B cell (primary cell): ENCODE measurements at regions of chr3 and their contacts with region 1.

Region 1: DNA sequence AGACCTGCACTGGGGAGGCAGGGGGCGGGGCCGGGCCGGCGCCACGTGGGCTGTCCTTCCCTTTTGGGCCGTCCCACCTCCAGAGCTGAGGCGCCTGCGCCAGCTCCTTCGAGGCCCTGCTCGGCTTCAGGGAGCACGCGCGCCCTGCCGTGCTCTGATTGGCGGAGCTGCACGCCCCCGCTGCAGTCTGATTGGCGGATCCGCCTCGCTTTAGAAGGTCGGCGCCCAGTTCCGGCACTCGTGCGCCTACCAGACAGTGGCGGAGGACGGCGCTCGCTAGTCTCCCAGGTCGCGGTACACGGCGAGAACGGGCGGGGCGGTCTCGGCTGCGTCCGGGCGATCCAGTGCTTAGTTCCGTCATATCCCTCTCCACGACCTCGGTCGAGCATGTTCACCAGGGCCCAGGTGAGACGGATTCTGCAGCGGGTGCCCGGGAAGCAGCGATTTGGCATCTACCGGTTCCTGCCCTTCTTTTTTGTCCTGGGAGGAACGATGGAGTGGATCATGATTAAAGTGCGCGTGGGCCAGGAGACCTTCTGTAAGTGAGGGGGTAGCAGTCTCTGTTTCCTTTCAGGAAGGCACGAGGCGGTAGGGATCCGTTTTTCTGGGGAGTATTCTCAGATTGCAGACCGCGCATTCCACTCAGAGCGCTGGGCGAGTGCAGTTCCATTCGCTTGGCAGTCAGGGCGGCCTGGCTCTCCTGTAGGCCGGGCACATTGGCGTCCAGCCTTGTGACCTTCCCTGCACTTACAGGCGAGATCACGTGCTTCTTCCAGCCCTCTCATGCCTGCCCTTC is at the start of gene UQCC5:
- DNase-seq: peak; percentile 99
- ATAC-seq: peak; percentile 84
- H3K4me3 ChIP-seq: peak within 1 kb of the TSS; percentile 90 to 99 (median 95)
- H3K4me3 Mint-ChIP-seq: peak within 1 kb of the TSS; percentile 99
- H3K27ac ChIP-seq: peak within 1 kb of the TSS; percentile 84 to 93
- H3K27ac Mint-ChIP-seq: peak within 1 kb of the TSS; percentile 99
- H3K4me1 ChIP-seq: peaks cover 34 to 51% of the 10 kb centered on the region in 2 donors
- H3K4me1 Mint-ChIP-seq: peaks cover 46% of the 10 kb centered on the region
- H3K27me3 ChIP-seq: peaks cover 0 to 13% (median 0%) of the 10 kb centered on the region in 4 experiments
- H3K27me3 Mint-ChIP-seq: no peaks in the 10 kb centered on the region
- CTCF ChIP-seq: no peak
- total RNA-seq, gene UQCC5: 10.3 and 16.4 TPM in 2 replicates

Region 2: DNA sequence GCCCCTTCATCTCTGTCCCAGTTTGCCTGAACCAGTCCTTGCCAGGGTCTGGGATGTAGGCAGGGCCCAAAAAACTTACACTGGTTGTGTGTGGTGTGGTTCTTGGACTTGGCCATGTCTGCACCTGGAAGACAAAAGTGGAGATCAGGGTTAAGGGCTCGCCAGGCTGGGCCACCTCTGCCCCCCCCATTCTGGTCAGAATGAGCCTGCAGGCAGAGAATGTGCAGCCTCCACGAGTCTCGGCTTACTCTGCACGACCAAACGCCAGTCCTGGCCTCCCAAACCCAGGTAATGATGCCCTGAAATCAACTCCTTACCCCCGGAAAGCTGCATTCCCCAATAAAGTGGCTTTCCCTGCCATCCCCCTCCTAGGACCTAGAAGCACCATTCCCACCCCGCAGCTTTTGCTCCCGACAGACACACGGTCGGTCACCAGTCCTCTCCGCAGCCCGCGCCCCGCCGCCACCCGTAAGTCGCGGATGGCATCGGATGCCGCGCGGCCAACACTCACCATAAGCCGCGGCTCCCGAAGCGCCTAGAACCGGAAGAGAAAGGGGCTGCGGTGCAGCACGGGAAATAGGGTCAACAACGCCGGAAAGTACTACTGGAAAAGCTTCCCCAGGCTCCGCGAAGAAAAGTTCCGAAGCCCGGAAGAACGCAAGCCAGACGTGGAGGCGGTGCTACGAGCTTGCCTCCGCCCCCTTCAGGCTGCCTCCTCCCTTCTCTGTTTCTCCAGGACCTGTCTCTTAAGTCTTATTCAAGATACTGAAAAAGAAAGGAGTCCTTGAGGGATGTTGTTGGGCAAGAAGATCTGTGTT is 541.0 kb before region 1 on chr3 and contains the start of gene RPL29:
- CTCF ChIA-PET with region 1: no interaction called
- POLR2A ChIA-PET with region 1: interaction called, 4 read pairs
- intact Hi-C with region 1: loop called (anchors 2 kb)
- DNase-seq: peak; percentile 95
- ATAC-seq: peak; percentile 98
- H3K4me3 ChIP-seq: peak within 1 kb of the TSS; percentile 89 to 99 (median 94)
- H3K4me3 Mint-ChIP-seq: peak within 1 kb of the TSS; percentile 100
- H3K27ac ChIP-seq: peak within 1 kb of the TSS; percentile 87 to 91
- H3K27ac Mint-ChIP-seq: peak within 1 kb of the TSS; percentile 100
- H3K4me1 ChIP-seq: peaks cover 13 to 19% of the 10 kb centered on the region in 2 donors
- H3K4me1 Mint-ChIP-seq: peaks cover 33% of the 10 kb centered on the region
- H3K27me3 ChIP-seq: no peaks in the 10 kb centered on the region
- H3K27me3 Mint-ChIP-seq: peaks cover 6% of the 10 kb centered on the region
- CTCF ChIP-seq: no peak
- total RNA-seq, gene RPL29: 1,460 and 1,552 TPM in 2 replicates

Region 3: GRCh38 chr3:52507359-52507758 is 29.2 kb before region 1 on chr3:
- CTCF ChIA-PET with region 1: no interaction called
- POLR2A ChIA-PET with region 1: no interaction called
- intact Hi-C with region 1: no loop called
- DNase-seq: no peak
- ATAC-seq: no peak
- H3K4me3 ChIP-seq: no peak overlapping the region
- H3K4me3 Mint-ChIP-seq: no peak overlapping the region
- H3K27ac ChIP-seq: no peak overlapping the region
- H3K27ac Mint-ChIP-seq: no peak overlapping the region
- H3K4me1 ChIP-seq: no peaks in the 10 kb centered on the region
- H3K4me1 Mint-ChIP-seq: no peaks in the 10 kb centered on the region
- H3K27me3 ChIP-seq: no peaks in the 10 kb centered on the region
- H3K27me3 Mint-ChIP-seq: no peaks in the 10 kb centered on the region
- CTCF ChIP-seq: no peak

Region 4: DNA sequence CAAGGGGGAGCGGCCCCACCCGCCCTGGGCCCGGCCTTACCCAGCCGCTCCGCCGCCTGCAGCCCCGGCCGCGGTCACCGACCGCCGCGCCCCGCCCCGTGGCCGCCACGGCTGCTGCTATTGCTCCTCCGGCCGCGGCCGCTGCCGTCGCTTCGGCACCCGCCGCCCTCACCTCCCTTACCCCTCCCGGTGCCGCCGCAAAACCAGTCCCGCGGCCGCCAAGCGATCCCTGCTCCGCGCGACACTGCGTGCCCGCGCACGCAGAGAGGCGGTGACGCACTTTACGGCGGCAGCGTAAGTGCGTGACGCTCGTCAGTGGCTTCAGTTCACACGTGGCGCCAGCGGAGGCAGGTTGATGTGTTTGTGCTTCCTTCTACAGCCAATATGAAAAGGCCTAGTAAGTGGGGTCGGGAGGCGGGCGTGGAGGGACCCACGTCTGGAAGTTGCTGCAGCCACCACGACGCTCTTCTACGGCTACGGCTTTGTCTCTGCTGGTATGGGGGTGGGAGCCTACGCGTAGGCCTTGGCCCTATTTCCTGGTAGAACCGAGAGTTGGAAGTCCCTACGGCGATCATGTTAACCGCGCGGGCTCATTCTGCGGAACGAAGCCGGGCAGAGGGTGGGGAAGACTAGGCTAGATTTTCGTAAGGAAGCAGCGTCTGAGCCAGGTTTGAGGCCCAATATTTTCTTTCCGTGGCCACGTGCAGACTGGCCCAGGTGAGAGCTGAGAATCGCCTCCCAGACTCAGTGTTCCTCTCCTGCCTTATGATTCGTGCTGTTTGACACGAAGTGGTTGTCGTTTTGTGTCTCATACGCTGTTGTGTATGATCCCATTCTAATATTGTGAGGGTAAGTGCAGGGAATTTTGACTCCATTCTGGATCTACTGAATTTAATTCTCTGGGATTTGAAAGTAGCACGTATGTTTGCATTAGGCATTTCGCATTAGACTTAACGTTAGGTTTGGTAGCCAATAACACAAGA is 149.4 kb after region 1 on chr3 and contains the starts of genes GNL3 and PBRM1:
- CTCF ChIA-PET with region 1: no interaction called
- POLR2A ChIA-PET with region 1: no interaction called
- intact Hi-C with region 1: loop called (anchors 1 kb)
- DNase-seq: peak; percentile 98
- ATAC-seq: peak; percentile 86
- H3K4me3 ChIP-seq: peak within 1 kb of the TSS; percentile 67 to 90 (median 86)
- H3K4me3 Mint-ChIP-seq: peak within 1 kb of the TSS; percentile 99
- H3K27ac ChIP-seq: peak within 1 kb of the TSS; percentile 92 to 97
- H3K27ac Mint-ChIP-seq: peak within 1 kb of the TSS; percentile 100
- H3K4me1 ChIP-seq: peaks cover 20 to 21% of the 10 kb centered on the region in 2 donors
- H3K4me1 Mint-ChIP-seq: peaks cover 36% of the 10 kb centered on the region
- H3K27me3 ChIP-seq: no peaks in the 10 kb centered on the region
- H3K27me3 Mint-ChIP-seq: no peaks in the 10 kb centered on the region
- CTCF ChIP-seq: no peak
- total RNA-seq, gene GNL3: 67.3 and 68.5 TPM in 2 replicates
- total RNA-seq, gene PBRM1: 81.1 and 85.9 TPM in 2 replicates

Region 5: DNA sequence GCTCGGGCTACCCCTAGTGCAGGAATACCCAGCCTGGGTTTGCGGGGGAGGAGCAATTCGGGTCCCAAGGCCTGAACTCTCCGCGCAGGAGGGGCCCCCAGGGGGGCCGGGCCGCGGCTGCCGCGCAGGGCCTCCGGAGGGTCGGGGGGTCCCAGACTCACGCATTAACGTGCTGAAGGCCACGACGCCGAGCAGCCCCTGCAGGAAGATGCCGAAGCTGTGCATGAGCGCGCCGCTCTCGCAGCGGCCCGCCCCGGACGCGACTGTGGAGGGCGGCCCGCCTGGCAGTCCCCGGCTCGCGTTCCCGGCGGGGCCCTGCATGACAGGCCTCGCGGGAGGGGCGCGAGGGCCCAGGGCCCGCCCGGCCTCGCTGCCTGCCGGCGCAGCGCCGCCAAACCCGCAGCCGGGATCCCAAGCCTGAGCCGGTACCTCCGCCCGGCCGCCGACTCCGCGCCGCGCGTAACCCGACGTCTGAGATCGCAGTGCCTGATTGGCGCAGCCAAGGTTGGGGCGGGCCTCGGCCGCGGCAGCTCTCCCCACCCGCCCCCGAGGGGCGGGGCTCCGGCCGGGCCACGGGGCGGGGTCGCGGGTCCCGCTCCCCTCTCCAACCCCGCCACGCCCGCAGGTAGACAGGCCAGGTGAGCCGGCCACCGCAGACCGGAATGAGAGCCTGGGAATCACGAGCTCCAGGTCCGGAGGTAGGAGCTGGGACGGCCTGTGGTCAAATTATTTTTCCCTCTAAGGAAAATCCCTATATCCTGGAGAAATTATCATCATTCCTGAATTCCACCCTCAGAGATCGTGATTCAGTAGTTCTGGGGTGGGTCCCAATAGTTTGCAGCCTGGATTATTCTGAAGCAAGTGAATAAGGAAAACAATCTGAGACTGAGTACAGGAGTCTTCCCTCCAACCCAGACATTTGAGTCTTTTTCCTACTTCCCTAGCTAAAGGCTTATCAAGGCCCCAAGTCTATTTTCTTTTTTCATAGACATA is 360.9 kb after region 1 on chr3 and contains the start of gene STIMATE:
- CTCF ChIA-PET with region 1: no interaction called
- POLR2A ChIA-PET with region 1: no interaction called
- intact Hi-C with region 1: loop called (anchors 5 kb)
- DNase-seq: peak; percentile 90
- ATAC-seq: peak; percentile 95
- H3K4me3 ChIP-seq: peak within 1 kb of the TSS; percentile 69 to 84 (median 78)
- H3K4me3 Mint-ChIP-seq: peak within 1 kb of the TSS; percentile 93
- H3K27ac ChIP-seq: peak within 1 kb of the TSS in 1 of 2 donors; percentile 52
- H3K27ac Mint-ChIP-seq: peak within 1 kb of the TSS; percentile 78
- H3K4me1 ChIP-seq: peaks cover 17 to 27% of the 10 kb centered on the region in 2 donors
- H3K4me1 Mint-ChIP-seq: peaks cover 48% of the 10 kb centered on the region
- H3K27me3 ChIP-seq: no peaks in the 10 kb centered on the region
- H3K27me3 Mint-ChIP-seq: no peaks in the 10 kb centered on the region
- CTCF ChIP-seq: no peak
- total RNA-seq, gene STIMATE: 37.7 and 38.4 TPM in 2 replicates